ENCODE measurements at regions of chr17 and their contacts with region 1.

Region 1: GRCh38 chr17:43832976-43833829 is at the start of gene MPP3:
- DNase-seq: no peak
- ATAC-seq: peak; percentile 91
- H3K4me3 ChIP-seq: peak within 1 kb of the TSS; percentile 56 to 88
- H3K27ac ChIP-seq: peak within 1 kb of the TSS; percentile 54
- H3K4me1 ChIP-seq: peaks cover 16 to 24% of the 10 kb centered on the region in 2 experiments
- H3K27me3 ChIP-seq: no peaks in the 10 kb centered on the region
- CTCF ChIP-seq: no peak
- POLR2A ChIP-seq: no peak
- RAD21 ChIP-seq: no peak
- total RNA-seq, gene MPP3: 19.5 TPM

Region 2: GRCh38 chr17:43661699-43662412 is 171.3 kb before region 1 on chr17 and contains the start of gene MEOX1:
- CTCF ChIA-PET with region 1: no interaction called
- POLR2A ChIA-PET with region 1: no interaction called
- RAD21 ChIA-PET with region 1: no interaction called
- intact Hi-C with region 1: no loop called
- DNase-seq: no peak
- ATAC-seq: peak; percentile 75
- H3K4me3 ChIP-seq: no peak within 1 kb of the TSS
- H3K27ac ChIP-seq: no peak within 1 kb of the TSS
- H3K4me1 ChIP-seq: peaks cover 2 to 9% of the 10 kb centered on the region in 2 experiments; a peak in 3 of 4 replicates
- H3K27me3 ChIP-seq: no peaks in the 10 kb centered on the region
- CTCF ChIP-seq: no peak
- POLR2A ChIP-seq: no peak
- RAD21 ChIP-seq: no peak
- total RNA-seq, gene MEOX1: not detected

Region 3: GRCh38 chr17:43778337-43779144 is 54.7 kb before region 1 on chr17 and contains the start of gene DUSP3:
- CTCF ChIA-PET with region 1: no interaction called
- POLR2A ChIA-PET with region 1: no interaction called
- RAD21 ChIA-PET with region 1: no interaction called
- intact Hi-C with region 1: loop called (anchors 2 kb)
- DNase-seq: peak; percentile 81
- ATAC-seq: peak; percentile 90
- H3K4me3 ChIP-seq: peak within 1 kb of the TSS; percentile 78 to 81
- H3K27ac ChIP-seq: peak within 1 kb of the TSS; percentile 87
- H3K4me1 ChIP-seq: peaks cover 7 to 13% of the 10 kb centered on the region in 2 experiments; a peak in 3 of 4 replicates
- H3K27me3 ChIP-seq: no peaks in the 10 kb centered on the region
- CTCF ChIP-seq: no peak
- POLR2A ChIP-seq: peak; percentile 63
- RAD21 ChIP-seq: no peak
- total RNA-seq, gene DUSP3: 29.6 TPM

Measured in HCT116 (cell line).